Sciatic nerve (tissue), 2 donors: ENCODE measurements at regions of chr5 and their contacts with region 1.

Region 1: DNA sequence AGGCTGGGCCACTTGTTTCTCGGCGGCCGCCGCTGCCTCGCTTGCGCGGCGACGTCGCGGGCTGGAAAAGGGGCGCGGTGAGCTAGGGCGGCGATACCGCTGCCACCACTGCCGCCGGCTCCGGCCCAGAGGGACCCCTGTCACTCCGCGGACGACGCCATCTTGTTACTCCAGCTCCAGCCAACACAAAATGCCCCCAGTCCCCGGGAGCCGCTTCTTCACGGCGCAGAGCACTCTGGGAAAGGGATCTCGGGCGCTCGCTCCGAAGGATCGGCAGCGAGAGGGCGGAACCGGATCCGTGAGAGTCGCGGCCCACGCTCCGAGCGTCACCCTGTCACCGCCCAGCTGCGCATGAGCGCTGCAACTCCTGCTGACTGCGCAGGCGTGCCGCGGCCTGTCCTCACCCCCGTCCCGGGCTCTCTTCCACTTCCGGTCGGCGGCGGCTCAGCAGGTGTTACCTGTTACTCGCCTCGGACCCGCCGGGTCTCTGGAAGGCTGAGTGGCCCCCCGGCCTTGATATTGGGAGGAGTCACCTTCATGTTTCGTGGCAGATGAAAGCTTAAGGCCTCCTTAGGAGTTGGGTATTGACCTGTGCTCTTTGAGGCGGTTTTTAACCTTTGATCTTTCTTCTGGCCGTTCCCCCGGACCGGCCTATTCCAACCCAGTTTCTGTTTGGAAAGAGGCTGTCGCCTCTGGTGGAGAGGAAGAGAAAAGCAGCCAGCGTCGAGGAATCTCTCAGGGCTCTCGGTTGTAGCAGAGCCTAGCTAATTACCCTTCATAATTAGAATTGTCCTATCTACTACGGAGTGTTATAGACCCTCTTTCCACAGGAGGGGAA is at the start of gene CSNK1A1:
- DNase-seq: peak; percentile 99
- ATAC-seq: peak; percentile 99
- total RNA-seq, gene CSNK1A1: 187 TPM

Region 2: GRCh38 chr5:149442563-149443182 is 108.7 kb before region 1 on chr5:
- intact Hi-C with region 1: loop called (anchors 5 kb)
- DNase-seq: peak; percentile 92
- ATAC-seq: peak; percentile 87